Dendritic cell treated with granulocyte-macrophage colony-stimulating factor and Interleukin-4, amounts not matched to agents 40 ng/mL and 50 ng/mL, for 4 days (primary cell): ENCODE measurements at regions of chr2 and their contacts with region 1.

Region 1: GRCh38 chr2:127479219-127479825 is 47.0 kb downstream of the IWS1 start:
- H3K4me3 Mint-ChIP-seq: no peak overlapping the region
- H3K27ac Mint-ChIP-seq: no peak overlapping the region
- H3K4me1 Mint-ChIP-seq: no peaks in the 10 kb centered on the region
- H3K27me3 Mint-ChIP-seq: no peaks in the 10 kb centered on the region

Region 2: GRCh38 chr2:127197475-127198385 is 281.6 kb before region 1 on chr2:
- intact Hi-C with region 1: loop called (anchors 5 kb)
- H3K4me3 Mint-ChIP-seq: peak overlapping the region; percentile 41
- H3K27ac Mint-ChIP-seq: no peak overlapping the region
- H3K4me1 Mint-ChIP-seq: peaks cover 6% of the 10 kb centered on the region
- H3K27me3 Mint-ChIP-seq: peaks cover 11% of the 10 kb centered on the region

Region 3: DNA sequence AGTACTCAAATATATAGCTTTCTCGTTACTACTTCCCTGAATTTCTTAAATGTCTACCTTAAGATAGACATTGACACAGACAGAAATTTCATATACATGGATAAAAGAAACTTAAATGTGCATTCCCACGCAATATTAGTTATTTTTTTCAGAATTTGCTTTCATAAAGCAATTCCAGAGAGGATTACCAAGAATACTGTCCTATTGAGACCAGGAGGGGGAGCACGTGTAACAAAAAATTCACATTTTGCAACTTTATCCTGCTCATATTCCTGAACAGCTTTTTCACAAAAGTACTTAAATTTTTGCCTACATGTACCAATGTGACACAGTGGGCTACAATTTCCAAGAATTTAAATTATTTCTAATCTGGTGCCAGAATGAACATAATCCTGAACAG is 154.7 kb before region 1 on chr2:
- intact Hi-C with region 1: loop called (anchors 2 kb)
- H3K4me3 Mint-ChIP-seq: no peak overlapping the region
- H3K27ac Mint-ChIP-seq: no peak overlapping the region
- H3K4me1 Mint-ChIP-seq: no peaks in the 10 kb centered on the region
- H3K27me3 Mint-ChIP-seq: no peaks in the 10 kb centered on the region

Region 4: DNA sequence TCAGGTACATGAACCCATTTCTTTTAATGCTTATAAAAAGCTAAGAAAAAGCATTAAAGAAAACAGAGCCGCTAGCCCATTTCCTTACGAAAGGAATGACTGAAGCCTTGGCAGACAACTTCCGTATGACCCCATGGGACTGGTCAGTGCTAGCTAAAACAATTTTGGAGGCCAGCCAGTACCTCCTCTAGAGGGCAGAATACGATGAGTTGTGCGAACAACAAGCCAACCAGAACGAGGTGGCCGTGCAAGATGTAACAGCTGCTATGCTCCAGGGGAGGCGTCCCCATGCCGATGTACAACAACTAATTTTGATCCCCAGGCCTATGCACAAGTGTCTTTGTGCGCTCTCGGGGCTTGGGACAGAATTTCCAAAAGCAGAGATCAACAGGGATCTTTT is 108.3 kb before region 1 on chr2:
- intact Hi-C with region 1: no loop called
- H3K4me3 Mint-ChIP-seq: no peak overlapping the region
- H3K27ac Mint-ChIP-seq: no peak overlapping the region
- H3K4me1 Mint-ChIP-seq: peaks cover 41% of the 10 kb centered on the region
- H3K27me3 Mint-ChIP-seq: no peaks in the 10 kb centered on the region

Region 5: DNA sequence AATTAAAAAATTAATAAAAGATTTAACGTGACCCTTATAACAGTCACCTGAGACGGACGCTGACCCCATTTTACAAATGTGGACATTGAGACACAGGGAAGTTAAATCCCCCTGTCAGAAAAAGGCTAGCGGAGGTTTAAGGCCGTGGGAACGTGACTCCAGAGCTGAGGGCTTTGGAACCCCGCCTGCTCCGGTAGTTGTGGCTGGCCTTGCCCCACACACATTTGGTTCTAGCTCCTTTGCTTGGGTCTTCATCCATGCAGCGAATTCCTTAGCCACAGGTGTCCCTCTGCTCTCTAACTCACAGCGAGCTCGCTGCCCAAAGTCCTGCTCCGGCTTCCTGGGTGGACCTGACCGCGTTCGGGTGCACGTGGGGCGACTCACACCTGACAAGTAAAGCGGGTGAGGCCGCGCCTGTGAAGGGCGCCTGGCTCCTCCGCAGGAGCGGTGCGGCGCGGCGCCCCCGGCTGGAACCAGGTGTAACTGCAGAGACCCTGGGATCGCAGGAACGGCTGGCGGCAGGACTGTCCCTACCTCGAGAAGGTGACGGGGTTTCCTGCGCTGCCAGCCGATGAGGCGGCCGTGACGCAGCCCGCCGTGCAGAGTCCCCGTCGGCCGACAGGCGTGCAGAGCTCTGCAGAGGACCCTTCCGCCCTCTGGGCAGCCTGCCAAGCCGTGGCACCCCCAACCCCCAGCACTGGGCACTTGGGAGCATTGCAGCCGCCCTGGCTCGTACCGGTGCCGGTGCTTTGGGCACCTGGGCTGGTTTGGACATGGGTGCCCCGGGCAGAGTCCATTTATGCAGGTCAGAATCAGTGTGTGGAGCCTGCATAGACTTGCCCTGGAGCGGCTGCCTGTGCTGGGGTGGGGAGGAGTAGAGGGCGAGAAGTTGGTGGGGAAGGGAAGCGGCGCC is 63.5 kb before region 1 on chr2:
- intact Hi-C with region 1: no loop called
- H3K4me3 Mint-ChIP-seq: peak overlapping the region; percentile 77
- H3K27ac Mint-ChIP-seq: peak overlapping the region; percentile 75
- H3K4me1 Mint-ChIP-seq: peaks cover 60% of the 10 kb centered on the region
- H3K27me3 Mint-ChIP-seq: peaks cover 29% of the 10 kb centered on the region